ENCODE measurements at regions of chr14 and their contacts with region 1.

Region 1: DNA sequence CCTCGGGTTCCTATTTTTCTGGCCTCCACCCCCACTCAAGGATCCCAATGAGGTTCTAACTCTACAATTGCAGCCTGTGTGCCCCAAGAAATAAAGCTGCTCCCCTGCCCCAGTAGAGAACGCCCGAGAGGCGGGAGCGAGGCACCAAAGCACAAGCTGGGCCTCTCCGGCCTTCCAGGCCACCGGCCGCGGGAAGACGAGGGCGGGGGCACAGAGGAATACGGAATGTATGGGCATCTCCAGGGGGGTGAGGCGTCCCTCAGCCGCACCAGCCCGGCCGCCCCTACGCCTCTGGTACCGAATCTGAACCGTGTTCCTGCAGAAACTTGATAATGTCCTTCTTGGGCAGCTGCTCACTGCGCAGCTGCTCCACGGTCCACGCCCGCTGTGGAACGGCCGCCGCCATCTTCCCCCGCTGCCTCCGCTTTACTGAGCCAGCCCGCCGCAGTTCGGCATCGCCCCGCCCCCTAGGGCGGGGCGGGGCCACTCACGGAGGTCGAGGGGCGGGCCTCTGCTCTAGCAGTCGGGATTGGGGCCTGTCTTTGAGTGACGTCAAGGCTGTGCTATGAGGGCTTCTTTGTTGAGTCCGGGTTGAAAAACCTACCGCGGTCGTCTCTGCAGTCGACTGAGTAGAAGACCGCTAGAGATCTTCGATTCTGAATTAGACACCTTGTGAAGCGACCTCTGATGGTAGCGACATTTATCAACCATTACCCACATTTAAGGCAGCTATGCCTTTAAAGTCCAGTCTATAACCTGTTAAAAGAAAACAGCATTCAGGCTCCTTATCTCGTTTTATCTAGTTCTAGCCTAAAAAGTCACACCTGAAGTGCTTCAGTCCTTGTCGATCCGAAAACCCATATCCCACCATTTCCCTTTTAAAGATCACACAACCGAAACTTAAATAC is at the start of gene FKBP3:
- DNase-seq: peak; percentile 96 to 98 (median 98)
- ATAC-seq: peak; percentile 98 to 99 (median 98)
- H3K4me3 ChIP-seq: peak within 1 kb of the TSS; percentile 60 to 91 (median 80)
- H3K27ac ChIP-seq: peak within 1 kb of the TSS; percentile 76 to 95 (median 90)
- H3K4me1 ChIP-seq: peaks cover 7 to 55% (median 35%) of the 10 kb centered on the region in 12 donors
- H3K27me3 ChIP-seq: no peaks in the 10 kb centered on the region
- CTCF ChIP-seq: peak in 4 of 12 donors; percentile 14 to 38 (median 25)
- POLR2A ChIP-seq: peak in 1 of 2 donors; percentile 83
- total RNA-seq, gene FKBP3: 66.8 to 131 (median 99.1) TPM

Region 2: GRCh38 chr14:44897045-44897844 is 237.1 kb before region 1 on chr14:
- intact Hi-C with region 1: loop called in 3 of 10 experiments (anchors 2 to 5 kb)
- DNase-seq: peak; percentile 97 to 99 (median 98)
- ATAC-seq: peak; percentile 99
- H3K4me3 ChIP-seq: peak overlapping the region; percentile 73 to 97 (median 90)
- H3K27ac ChIP-seq: peak overlapping the region; percentile 94 to 100 (median 99)
- H3K4me1 ChIP-seq: peaks cover 0 to 34% (median 16%) of the 10 kb centered on the region in 12 donors
- H3K27me3 ChIP-seq: no peaks in the 10 kb centered on the region
- CTCF ChIP-seq: peak in 1 of 12 donors; percentile 4
- POLR2A ChIP-seq: peak in 1 of 2 donors; percentile 74

Region 3: GRCh38 chr14:44961604-44962333 is 172.5 kb before region 1 on chr14 and contains the starts of genes KLHL28 and TOGARAM1:
- intact Hi-C with region 1: loop called in 9 of 10 experiments (anchors 1 to 10 kb)
- DNase-seq: peak; percentile 94 to 98 (median 98)
- ATAC-seq: peak; percentile 95 to 98 (median 96)
- H3K4me3 ChIP-seq: peak within 1 kb of the TSS; percentile 65 to 97 (median 78)
- H3K27ac ChIP-seq: peak within 1 kb of the TSS; percentile 67 to 93 (median 88)
- H3K4me1 ChIP-seq: peaks cover 8 to 79% (median 46%) of the 10 kb centered on the region in 12 donors
- H3K27me3 ChIP-seq: no peaks in the 10 kb centered on the region
- CTCF ChIP-seq: no peak
- POLR2A ChIP-seq: peak in 1 of 2 donors; percentile 88
- total RNA-seq, gene KLHL28: 6.2 to 13.5 (median 10.5) TPM
- total RNA-seq, gene TOGARAM1: 15.2 to 24.0 (median 19.4) TPM

Region 4: DNA sequence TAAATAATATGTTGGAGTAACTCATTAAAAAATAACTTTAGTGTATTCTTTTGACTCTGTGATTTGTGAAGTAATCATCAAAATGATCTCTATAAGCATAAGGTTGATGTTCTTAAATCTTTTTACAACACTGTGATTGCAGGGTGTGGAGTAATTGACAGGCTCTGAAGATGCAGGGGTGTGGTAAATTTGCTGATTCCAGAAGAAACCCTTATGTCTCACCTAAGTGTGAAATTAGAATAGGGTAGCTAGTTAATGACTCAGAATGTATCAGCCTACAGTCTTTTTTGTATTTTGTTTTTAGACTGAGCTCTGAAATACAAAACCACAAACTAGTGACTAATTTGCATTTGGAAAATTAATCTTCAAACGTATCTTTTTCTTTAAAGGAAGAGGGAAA is 44.5 kb before region 1 on chr14:
- intact Hi-C with region 1: loop called in 4 of 10 experiments (anchors 5 to 10 kb)
- DNase-seq: no peak
- ATAC-seq: no peak
- H3K4me3 ChIP-seq: no peak overlapping the region
- H3K27ac ChIP-seq: no peak overlapping the region
- H3K4me1 ChIP-seq: peaks cover 0 to 57% (median 43%) of the 10 kb centered on the region in 12 donors
- H3K27me3 ChIP-seq: no peaks in the 10 kb centered on the region
- CTCF ChIP-seq: no peak
- POLR2A ChIP-seq: no peak

Region 5: GRCh38 chr14:45267071-45267470 is 132.8 kb after region 1 on chr14:
- intact Hi-C with region 1: loop called in 3 of 10 experiments (anchors 5 kb)
- DNase-seq: peak in 1 of 5 donors; percentile 26
- ATAC-seq: peak; percentile 91 to 96 (median 93)
- H3K4me3 ChIP-seq: no peak overlapping the region
- H3K27ac ChIP-seq: peak overlapping the region in 9 of 12 donors; percentile 5 to 81 (median 66)
- H3K4me1 ChIP-seq: peaks cover 0 to 16% (median 2%) of the 10 kb centered on the region in 12 donors
- H3K27me3 ChIP-seq: no peaks in the 10 kb centered on the region
- CTCF ChIP-seq: no peak
- POLR2A ChIP-seq: no peak